ENCODE measurements at regions of chr3 and their contacts with region 1.

Region 1: DNA sequence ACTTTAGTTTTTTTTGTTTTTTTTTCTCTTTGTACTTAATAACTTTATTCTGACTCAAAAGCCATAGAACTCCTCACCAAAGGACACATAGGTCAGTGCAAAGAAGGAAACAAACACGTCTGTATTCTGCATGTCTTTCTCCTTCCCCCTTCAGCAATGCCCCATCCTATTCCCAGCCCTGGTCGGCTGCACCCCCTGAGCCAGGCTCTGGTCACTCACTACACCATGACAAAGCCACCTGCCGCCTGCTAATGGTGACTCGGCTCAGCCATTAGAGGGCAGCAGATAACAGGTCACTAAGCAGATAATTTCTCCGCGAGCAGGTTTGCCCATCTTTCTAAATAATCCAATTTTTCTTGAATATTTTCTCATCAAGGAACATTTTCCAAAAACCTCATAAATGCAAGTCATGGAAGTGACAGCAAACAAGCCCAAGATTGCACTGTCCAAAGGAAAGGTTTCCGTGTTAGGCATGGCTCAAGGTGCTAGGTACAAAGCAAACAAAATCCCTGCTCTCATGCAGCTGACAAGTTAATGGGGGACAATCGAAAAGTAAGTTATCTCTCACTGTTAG is 37.8 kb downstream of the TM4SF4 start:
- DNase-seq: peak; percentile 53 to 73
- H3K4me3 ChIP-seq: no peak overlapping the region
- H3K27ac ChIP-seq: no peak overlapping the region
- H3K4me1 ChIP-seq: peaks cover 12% of the 10 kb centered on the region; the same call in 1 of the 2 replicates
- H3K27me3 ChIP-seq: no peaks in the 10 kb centered on the region
- CTCF ChIP-seq: peak; percentile 86

Region 2: GRCh38 chr3:149393345-149394160 is 118.7 kb before region 1 on chr3:
- CTCF ChIA-PET with region 1: no interaction called
- POLR2A ChIA-PET with region 1: no interaction called
- intact Hi-C with region 1: loop called (anchors 1 kb)
- DNase-seq: peak; percentile 37 to 64
- H3K4me3 ChIP-seq: no peak overlapping the region
- H3K27ac ChIP-seq: no peak overlapping the region
- H3K4me1 ChIP-seq: peaks cover 70% of the 10 kb centered on the region
- H3K27me3 ChIP-seq: no peaks in the 10 kb centered on the region
- CTCF ChIP-seq: peak; percentile 71

Region 3: GRCh38 chr3:149575961-149576564 is 63.8 kb after region 1 on chr3:
- CTCF ChIA-PET with region 1: no interaction called
- POLR2A ChIA-PET with region 1: no interaction called
- intact Hi-C with region 1: no loop called
- DNase-seq: peak; percentile 73 to 91
- H3K4me3 ChIP-seq: peak overlapping the region; percentile 35; the same call in 1 of the 2 replicates
- H3K27ac ChIP-seq: peak overlapping the region; percentile 98
- H3K4me1 ChIP-seq: peaks cover 89% of the 10 kb centered on the region
- H3K27me3 ChIP-seq: no peaks in the 10 kb centered on the region
- CTCF ChIP-seq: no peak

Region 4: DNA sequence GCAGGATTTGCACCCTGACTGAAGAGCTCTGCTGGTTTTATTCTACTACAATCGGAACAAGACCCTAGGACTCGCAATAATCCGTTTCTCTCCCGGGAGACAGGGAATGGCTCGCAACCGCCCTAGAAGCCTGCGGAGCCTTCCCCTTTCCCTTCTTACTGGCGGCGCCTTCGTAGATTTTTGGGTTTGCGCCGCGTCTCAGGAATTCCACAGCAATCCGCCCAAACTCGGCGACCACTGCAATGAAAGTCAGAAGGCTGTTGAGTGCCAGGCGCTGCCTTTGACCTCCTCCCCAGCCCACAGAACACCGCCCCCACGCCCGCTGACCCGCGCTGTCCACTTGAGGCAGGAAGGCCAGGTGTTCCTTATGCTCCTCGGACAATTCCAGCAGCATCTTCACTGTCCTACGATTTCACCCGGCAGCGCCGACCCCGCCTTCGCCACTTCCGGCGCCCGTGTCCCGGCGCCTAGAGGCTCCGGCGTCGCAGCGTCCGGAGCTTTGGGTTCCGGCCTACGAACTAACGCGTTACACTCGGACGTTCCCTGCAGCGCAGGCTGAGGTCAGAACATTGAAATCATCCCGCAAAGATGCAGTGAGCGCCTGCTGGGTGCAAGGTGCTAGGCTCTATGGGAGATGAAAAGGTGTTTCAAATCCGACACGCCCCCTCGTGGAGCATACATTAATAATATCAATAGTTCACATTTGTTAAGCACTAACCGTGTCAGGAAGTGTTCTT is 239.9 kb after region 1 on chr3 and contains the start of gene COMMD2:
- CTCF ChIA-PET with region 1: no interaction called
- POLR2A ChIA-PET with region 1: no interaction called
- intact Hi-C with region 1: loop called (anchors 5 kb)
- DNase-seq: peak; percentile 79 to 84
- H3K4me3 ChIP-seq: peak within 1 kb of the TSS; percentile 88
- H3K27ac ChIP-seq: peak within 1 kb of the TSS; percentile 51
- H3K4me1 ChIP-seq: peaks cover 17% of the 10 kb centered on the region
- H3K27me3 ChIP-seq: no peaks in the 10 kb centered on the region
- CTCF ChIP-seq: peak; percentile 74
- total RNA-seq, gene COMMD2: 58.2 and 74.7 TPM in 2 replicates

Region 5: GRCh38 chr3:149812606-149813366 is 300.5 kb after region 1 on chr3 and contains the start of gene RNF13:
- CTCF ChIA-PET with region 1: no interaction called
- POLR2A ChIA-PET with region 1: no interaction called
- intact Hi-C with region 1: loop called (anchors 2 kb)
- DNase-seq: peak; percentile 82 to 93
- H3K4me3 ChIP-seq: peak within 1 kb of the TSS; percentile 84
- H3K27ac ChIP-seq: peak within 1 kb of the TSS; percentile 96
- H3K4me1 ChIP-seq: peaks cover 46% of the 10 kb centered on the region
- H3K27me3 ChIP-seq: no peaks in the 10 kb centered on the region
- CTCF ChIP-seq: no peak
- total RNA-seq, gene RNF13: 40.1 and 65.0 TPM in 2 replicates

Region 6: GRCh38 chr3:149936812-149937233 is 424.5 kb after region 1 on chr3:
- CTCF ChIA-PET with region 1: no interaction called
- POLR2A ChIA-PET with region 1: no interaction called
- intact Hi-C with region 1: loop called (anchors 10 kb)
- DNase-seq: peak in 1 of 2 experiments; percentile 44
- H3K4me3 ChIP-seq: no peak overlapping the region
- H3K27ac ChIP-seq: no peak overlapping the region
- H3K4me1 ChIP-seq: no peaks in the 10 kb centered on the region
- H3K27me3 ChIP-seq: no peaks in the 10 kb centered on the region
- CTCF ChIP-seq: peak; percentile 76

Region 7: GRCh38 chr3:150183678-150184425 is 671.6 kb after region 1 on chr3:
- CTCF ChIA-PET with region 1: no interaction called
- POLR2A ChIA-PET with region 1: no interaction called
- intact Hi-C with region 1: loop called (anchors 10 kb)
- DNase-seq: peak; percentile 58
- H3K4me3 ChIP-seq: peak overlapping the region; percentile 54
- H3K27ac ChIP-seq: 0 out of 2 replicates have a peak overlapping the region, but pooled peaks have one; percentile 17
- H3K4me1 ChIP-seq: peaks cover 18% of the 10 kb centered on the region
- H3K27me3 ChIP-seq: no peaks in the 10 kb centered on the region
- CTCF ChIP-seq: peak; percentile 64; the same call in 1 of the 2 replicates